Posterior vena cava (tissue), 2 donors: ENCODE measurements at regions of chr14 and their contacts with region 1.

Region 1: DNA sequence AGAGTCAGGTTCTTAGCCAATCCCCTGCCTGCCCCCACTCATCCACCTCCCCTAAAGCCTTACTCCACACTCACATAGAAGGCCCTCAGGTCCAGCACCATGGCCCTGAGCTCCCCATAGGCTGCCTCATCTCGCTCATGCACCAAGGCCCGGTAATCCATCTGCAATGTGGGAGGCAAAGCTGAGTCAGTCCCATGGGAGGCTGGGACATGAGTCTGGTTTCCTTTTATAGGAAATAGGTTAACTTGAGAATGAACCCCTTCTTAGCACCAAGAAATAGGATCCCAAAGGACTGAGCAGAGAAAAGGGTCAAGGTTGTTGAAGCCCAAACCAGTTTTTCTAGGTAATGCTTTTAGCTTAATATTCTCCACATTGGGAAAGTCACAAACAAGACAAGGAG is 2.1 kb upstream of the EMC9 start:
- DNase-seq: no peak

Region 2: GRCh38 chr14:24108336-24108874 is 35.1 kb before region 1 on chr14:
- intact Hi-C with region 1: no loop called
- DNase-seq: no peak

Region 3: DNA sequence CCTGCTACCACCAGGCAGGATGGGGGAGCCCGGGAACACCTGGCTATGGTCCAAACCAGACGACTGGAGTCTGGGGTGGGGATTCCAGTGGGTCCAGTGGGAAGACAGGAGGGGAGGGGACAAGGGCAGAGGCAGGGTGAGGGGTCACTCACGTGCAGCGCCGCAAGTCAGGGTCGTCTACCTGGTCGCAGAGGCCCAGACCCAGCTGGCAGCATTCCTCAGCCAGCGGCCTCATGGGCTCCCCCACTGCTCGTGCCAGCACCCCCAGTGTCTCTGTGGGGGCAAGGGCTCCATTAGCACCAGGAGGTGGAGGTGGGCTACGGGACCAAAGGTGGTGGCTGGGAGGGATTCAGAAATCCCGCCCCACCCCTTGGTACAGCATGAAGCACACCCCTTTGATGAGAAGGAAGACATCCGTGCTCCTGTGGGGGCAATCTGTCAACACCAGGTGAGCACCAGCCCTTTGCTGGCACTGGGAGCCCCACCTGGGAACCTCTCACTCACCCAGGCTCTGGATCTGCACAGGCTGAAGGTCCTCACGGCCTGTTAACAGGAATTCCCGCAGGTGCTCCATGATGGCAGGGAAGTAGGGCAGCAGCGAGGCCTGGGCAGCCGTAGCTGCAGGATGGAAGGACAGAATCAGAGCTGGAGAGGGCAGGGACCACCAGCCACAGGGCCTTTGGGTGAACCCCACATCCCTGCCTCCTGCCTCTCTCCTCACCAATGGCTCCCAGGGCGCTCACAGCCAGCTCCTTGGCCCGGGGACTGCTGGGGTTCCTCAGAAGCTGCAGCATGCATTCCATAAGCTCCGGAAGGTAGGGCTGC is 40.8 kb after region 1 on chr14:
- intact Hi-C with region 1: loop called in 1 of 2 experiments (anchors 1 kb)
- DNase-seq: no peak

Region 4: DNA sequence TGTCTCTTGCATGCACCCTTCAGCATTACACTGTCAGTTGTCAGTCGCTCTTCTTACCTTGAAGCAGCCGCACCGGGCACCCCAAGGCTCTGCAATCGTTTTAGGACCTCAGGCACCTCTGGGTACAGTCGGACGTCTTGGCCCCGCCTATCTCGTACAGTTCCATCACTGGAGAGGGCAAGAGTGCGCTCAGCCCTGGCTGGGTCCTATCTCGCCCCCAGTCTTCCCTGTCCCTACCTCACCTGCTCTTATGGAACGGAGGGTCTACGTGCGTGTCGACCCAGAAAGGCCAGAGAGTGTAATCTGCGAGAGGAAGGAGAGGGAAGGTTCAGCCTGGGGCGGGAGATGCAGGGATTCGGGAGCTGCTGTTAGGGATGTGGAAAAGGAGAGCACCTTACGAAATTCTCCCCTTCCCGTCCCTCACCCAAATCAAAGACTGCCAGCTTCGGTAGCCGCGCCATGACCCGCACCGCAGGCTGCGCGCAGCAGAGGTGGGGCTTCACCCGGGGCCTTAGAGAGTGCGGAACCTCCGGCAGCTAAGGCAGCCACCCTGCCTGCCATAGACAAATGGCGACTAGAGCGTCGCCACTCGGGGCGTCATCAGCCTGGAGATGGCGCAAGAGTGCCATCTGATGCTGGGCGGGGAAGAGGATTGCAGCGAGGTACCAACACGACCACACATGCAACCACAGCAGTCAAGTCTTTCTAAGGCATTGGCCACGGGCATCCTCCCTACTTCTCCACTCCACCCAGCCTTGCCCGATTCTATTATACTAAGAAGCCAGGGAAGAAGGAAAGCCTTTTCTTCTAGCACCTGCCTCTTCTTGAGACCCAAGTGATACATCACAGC is 72.2 kb after region 1 on chr14 and contains the start of gene MDP1:
- intact Hi-C with region 1: no loop called
- DNase-seq: peak; percentile 96
- total RNA-seq, gene MDP1: 22.1 to 23.1 TPM